ENCODE measurements at regions of chr5 and their contacts with region 1.

Region 1: GRCh38 chr5:181223058-181223728 is at the start of gene TRIM41:
- DNase-seq: peak; percentile 98
- ATAC-seq: peak; percentile 78
- H3K4me3 ChIP-seq: peak within 1 kb of the TSS; percentile 82
- H3K27ac ChIP-seq: peak within 1 kb of the TSS; percentile 92
- H3K4me1 ChIP-seq: peaks cover 6% of the 10 kb centered on the region
- H3K27me3 ChIP-seq: no peaks in the 10 kb centered on the region
- CTCF ChIP-seq: peak; percentile 30; the same call in 1 of the 2 replicates
- POLR2A ChIP-seq: peak; percentile 95
- RAD21 ChIP-seq: peak; percentile 33
- total RNA-seq, gene TRIM41: 5.9 and 6.9 TPM in 2 replicates

Region 2: DNA sequence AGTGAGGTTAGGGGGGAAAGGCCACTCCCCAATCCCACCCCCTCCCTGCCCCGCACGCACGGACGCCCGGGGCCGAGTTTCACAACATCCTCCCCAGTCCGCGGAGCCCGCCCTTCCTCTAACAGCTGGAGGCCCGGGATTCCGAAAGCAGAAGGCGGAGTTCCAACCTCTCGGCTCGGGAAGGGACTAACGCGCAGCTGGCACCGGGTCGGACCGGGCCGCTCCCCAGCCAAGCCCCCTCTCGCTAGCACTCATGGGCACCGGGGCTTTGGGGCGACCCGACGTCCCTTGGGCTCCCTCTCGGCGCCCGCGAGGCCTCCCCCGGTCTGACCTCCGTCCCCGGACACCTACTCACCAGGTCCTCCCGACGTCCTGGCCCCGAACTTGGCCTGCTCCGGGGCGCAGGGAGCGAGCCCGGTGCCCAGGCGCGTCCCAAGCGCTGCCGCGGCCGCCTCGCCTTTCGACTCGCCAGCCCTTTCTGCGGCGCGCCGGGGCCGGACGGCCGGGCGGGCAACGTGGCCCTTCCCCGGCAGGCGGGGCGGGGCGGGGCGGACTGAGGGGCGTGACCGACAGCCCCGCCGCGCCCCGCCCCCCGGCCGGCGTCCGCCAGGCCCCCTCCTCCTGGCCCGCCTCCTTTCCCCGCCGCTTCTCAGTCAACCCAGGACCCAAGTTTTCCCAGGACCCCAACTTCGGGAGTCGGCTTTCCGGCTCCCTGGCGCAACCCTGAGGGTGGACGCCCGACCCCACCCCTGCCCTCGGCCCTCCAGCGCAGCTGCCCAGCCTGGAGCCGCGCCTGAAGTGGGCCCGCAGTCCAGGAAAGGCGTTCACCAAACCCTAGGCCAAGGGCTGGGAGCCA is 420.6 kb before region 1 on chr5 and contains the start of gene MGAT1:
- CTCF ChIA-PET with region 1: no interaction called
- POLR2A ChIA-PET with region 1: no interaction called
- dilution Hi-C with region 1: no loop called
- in situ Hi-C with region 1: no loop called
- intact Hi-C with region 1: loop called (anchors 1 kb)
- DNase-seq: peak; percentile 83
- ATAC-seq: peak; percentile 88
- H3K4me3 ChIP-seq: peak within 1 kb of the TSS; percentile 96
- H3K27ac ChIP-seq: peak within 1 kb of the TSS; percentile 99
- H3K4me1 ChIP-seq: peaks cover 37% of the 10 kb centered on the region
- H3K27me3 ChIP-seq: no peaks in the 10 kb centered on the region
- CTCF ChIP-seq: no peak
- POLR2A ChIP-seq: peak; percentile 96
- RAD21 ChIP-seq: no peak
- total RNA-seq, gene MGAT1: 56.3 and 62.2 TPM in 2 replicates

Region 3: GRCh38 chr5:181109489-181110013 is 113.6 kb before region 1 on chr5:
- CTCF ChIA-PET with region 1: no interaction called
- POLR2A ChIA-PET with region 1: no interaction called
- dilution Hi-C with region 1: no loop called
- in situ Hi-C with region 1: no loop called
- intact Hi-C with region 1: no loop called
- DNase-seq: no peak
- ATAC-seq: no peak
- H3K4me3 ChIP-seq: no peak overlapping the region
- H3K27ac ChIP-seq: no peak overlapping the region
- H3K4me1 ChIP-seq: no peaks in the 10 kb centered on the region
- H3K27me3 ChIP-seq: peaks cover 19% of the 10 kb centered on the region
- CTCF ChIP-seq: no peak
- POLR2A ChIP-seq: no peak
- RAD21 ChIP-seq: no peak

Region 4: GRCh38 chr5:181159286-181159829 is 63.8 kb before region 1 on chr5:
- CTCF ChIA-PET with region 1: no interaction called
- POLR2A ChIA-PET with region 1: no interaction called
- dilution Hi-C with region 1: no loop called
- in situ Hi-C with region 1: no loop called
- intact Hi-C with region 1: loop called (anchors 2 kb)
- DNase-seq: peak; percentile 60
- ATAC-seq: peak; percentile 89
- H3K4me3 ChIP-seq: no peak overlapping the region
- H3K27ac ChIP-seq: no peak overlapping the region
- H3K4me1 ChIP-seq: peaks cover 4% of the 10 kb centered on the region
- H3K27me3 ChIP-seq: peaks cover 4% of the 10 kb centered on the region
- CTCF ChIP-seq: peak; percentile 93
- POLR2A ChIP-seq: no peak
- RAD21 ChIP-seq: peak; percentile 92

Region 5: DNA sequence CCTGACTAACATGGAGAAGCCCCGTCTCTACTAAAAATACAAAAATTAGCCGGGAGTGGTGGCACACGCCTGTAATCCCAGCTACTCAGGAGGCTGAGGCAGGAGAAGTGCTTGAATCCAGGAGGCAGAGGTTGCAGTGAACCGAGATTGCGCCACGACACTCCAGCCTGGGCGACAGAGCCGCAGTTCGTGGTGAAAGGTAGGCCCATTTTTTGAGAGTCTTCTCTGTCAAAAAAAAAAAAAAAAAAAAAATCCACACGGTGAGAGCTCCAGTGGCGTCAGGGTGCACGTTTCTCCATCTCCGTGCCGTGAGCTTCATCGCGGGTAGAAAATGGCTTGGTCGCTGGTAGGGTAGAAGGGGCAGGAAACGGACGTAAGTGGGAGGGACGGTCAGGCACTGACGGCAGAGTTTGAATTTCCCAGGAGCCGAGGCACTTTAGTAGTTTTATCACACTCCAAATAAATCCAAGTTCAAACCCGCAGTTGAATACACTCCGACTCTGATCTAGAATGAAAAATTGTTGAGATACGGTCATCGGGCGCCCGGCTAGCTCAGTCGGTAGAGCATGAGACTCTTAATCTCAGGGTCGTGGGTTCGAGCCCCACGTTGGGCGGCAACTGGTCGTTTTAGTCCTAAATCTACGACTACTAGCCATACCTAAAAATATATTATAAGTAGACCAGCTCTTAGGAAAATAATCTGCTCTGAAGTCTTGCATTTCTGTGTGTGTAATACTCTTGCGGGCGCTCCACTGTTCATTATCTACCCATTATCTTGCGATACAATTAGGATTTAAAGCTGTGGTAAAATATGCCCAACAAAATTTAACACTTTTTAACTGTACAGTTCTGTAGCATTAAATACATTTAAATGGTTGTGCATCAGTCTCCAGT is 15.7 kb before region 1 on chr5:
- CTCF ChIA-PET with region 1: interaction called, 3 read pairs
- POLR2A ChIA-PET with region 1: interaction called, 3 read pairs
- dilution Hi-C with region 1: no loop called
- in situ Hi-C with region 1: no loop called
- intact Hi-C with region 1: loop called (anchors 1 kb)
- DNase-seq: peak; percentile 93
- ATAC-seq: peak; percentile 77
- H3K4me3 ChIP-seq: peak overlapping the region; percentile 72
- H3K27ac ChIP-seq: peak overlapping the region; percentile 42
- H3K4me1 ChIP-seq: peaks cover 4% of the 10 kb centered on the region; the same call in 1 of the 2 replicates
- H3K27me3 ChIP-seq: no peaks in the 10 kb centered on the region; the same call in 1 of the 2 replicates
- CTCF ChIP-seq: no peak
- POLR2A ChIP-seq: no peak
- RAD21 ChIP-seq: no peak

Region 6: DNA sequence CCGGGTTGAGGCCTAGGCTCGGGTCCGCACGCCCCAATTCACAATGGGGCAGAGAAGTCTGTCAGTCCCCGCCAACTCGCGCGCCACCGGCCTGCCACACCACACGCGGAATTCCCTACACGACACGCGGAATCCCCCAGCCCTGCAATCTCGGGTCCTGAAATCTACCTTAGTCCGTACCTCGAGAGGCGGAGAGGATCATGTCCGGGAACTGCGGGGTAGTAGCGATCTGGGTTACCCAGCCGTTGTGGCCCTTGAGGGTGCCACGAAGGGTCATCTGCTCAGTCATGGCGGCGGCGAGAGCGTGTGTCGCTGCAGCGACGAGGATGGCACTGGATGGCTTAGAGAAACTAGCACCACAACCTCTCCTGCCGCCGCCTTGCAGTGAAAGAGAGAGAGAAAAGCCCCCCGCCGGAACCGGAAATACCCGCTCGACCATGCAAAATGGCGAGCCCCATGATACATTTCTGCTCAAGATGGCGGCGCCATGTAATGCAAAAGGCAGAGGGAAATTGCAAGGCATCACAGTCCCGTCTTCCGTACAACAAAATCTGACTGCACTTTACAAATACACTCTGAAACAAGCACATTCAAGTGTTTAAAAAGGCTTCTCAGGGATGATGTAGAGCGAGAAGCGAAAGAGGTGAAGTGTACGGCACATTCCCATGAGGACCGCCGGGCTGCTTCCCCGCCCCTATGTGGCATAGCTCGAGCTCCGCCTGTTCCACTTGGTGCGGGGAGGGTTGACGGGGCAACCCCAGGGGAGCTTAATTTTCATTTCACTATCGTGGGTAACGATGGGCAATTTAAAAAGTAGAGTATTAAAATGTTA is 20.5 kb after region 1 on chr5 and contains the start of gene RACK1:
- CTCF ChIA-PET with region 1: no interaction called
- POLR2A ChIA-PET with region 1: no interaction called
- dilution Hi-C with region 1: no loop called
- in situ Hi-C with region 1: no loop called
- intact Hi-C with region 1: loop called (anchors 1 kb)
- DNase-seq: peak; percentile 85
- ATAC-seq: peak; percentile 67
- H3K4me3 ChIP-seq: peak within 1 kb of the TSS; percentile 85
- H3K27ac ChIP-seq: peak within 1 kb of the TSS; percentile 88
- H3K4me1 ChIP-seq: peaks cover 18% of the 10 kb centered on the region
- H3K27me3 ChIP-seq: no peaks in the 10 kb centered on the region
- CTCF ChIP-seq: no peak
- POLR2A ChIP-seq: peak; percentile 97
- RAD21 ChIP-seq: no peak
- total RNA-seq, gene RACK1: 5,432 and 9,350 TPM in 2 replicates